Activated CD4-positive, alpha-beta T cell treated with anti-CD3 and anti-CD28 coated beads, Interleukin-2, amount 10 ng/mL, durations not matched to agents 24 days and 14 days (primary cell): ENCODE measurements at regions of chr12 and their contacts with region 1.

Region 1: DNA sequence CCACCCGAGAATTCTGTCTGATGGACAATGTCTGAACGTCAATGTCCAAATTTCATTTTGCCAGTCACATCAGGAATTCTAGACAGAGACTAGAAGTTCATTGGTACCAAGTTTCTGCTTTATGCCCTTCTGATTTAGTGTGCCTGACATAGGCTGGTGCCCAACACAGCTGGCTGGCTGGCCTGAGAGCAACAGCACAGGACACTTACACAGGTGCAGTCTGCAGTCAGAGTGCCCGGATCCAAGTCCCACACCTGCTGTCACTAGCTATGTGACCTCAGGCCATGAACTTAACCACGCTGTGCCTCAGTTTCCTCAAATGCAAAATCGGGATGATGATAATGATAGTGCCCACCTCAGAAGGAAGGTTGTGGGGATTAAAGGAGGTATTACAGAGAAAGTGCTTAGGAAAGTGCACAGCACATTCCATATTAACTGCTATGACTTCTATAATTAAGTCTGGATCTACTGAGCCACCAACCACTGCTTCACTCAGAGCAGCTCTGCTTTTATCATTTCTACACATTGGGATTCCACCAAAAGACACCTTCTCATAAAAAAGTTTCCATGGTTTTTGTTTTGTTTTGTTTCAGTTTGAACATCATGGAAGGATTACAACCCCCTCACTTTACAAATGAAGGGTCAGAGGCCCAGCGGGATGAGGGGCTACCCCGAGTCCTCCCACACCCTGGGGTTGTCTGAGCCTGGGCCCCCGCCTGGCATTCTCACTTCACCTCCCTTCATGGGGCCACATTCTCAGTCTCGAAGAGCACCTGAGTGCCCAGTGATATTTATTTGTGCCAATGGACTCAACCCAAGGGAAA is 168.8 kb upstream of the BCL2L14 start:
- DNase-seq: peak; percentile 72
- H3K4me3 Mint-ChIP-seq: peak overlapping the region; percentile 58
- H3K27ac Mint-ChIP-seq: peak overlapping the region; percentile 97
- H3K4me1 Mint-ChIP-seq: peaks cover 62% of the 10 kb centered on the region
- H3K27me3 Mint-ChIP-seq: no peaks in the 10 kb centered on the region

Region 2: GRCh38 chr12:11765817-11766794 is 135.8 kb before region 1 on chr12:
- intact Hi-C with region 1: loop called (anchors 1 kb)
- DNase-seq: peak; percentile 74
- H3K4me3 Mint-ChIP-seq: peak overlapping the region; percentile 69
- H3K27ac Mint-ChIP-seq: peak overlapping the region; percentile 95
- H3K4me1 Mint-ChIP-seq: peaks cover 90% of the 10 kb centered on the region
- H3K27me3 Mint-ChIP-seq: no peaks in the 10 kb centered on the region

Region 3: DNA sequence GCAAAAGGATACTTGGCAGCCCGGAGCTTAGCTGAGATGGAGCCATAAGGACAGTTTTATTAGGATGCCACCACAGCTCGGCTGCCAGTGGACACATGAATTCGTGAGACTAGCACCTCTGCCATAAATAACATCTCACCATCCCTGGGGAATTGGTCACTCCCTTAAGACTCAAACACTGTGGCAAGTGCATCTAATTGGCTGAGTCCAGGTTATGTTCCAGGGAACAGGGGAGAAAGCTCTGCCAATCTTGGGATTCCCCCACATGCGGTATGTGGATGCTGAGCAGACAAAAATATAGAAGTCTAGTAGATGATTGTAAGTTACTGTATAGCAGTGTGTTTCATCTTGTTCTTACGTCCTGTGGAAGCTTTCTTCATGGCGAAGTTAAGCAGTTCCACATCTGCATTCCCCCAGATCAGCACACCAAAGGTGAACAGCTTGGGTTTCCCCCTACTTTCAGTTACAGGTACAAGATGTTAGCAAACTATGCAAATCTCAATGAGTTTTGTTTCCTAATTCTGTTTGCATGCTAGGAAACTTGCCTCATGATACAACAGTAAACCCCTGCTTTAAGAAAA is 121.3 kb before region 1 on chr12:
- intact Hi-C with region 1: loop called (anchors 1 kb)
- DNase-seq: peak; percentile 54
- H3K4me3 Mint-ChIP-seq: peak overlapping the region; percentile 29
- H3K27ac Mint-ChIP-seq: peak overlapping the region; percentile 87
- H3K4me1 Mint-ChIP-seq: peaks cover 66% of the 10 kb centered on the region
- H3K27me3 Mint-ChIP-seq: no peaks in the 10 kb centered on the region

Region 4: GRCh38 chr12:11958221-11959091 is 56.5 kb after region 1 on chr12:
- intact Hi-C with region 1: loop called (anchors 1 kb)
- DNase-seq: peak; percentile 85
- H3K4me3 Mint-ChIP-seq: peak overlapping the region; percentile 27
- H3K27ac Mint-ChIP-seq: peak overlapping the region; percentile 91
- H3K4me1 Mint-ChIP-seq: peaks cover 57% of the 10 kb centered on the region
- H3K27me3 Mint-ChIP-seq: no peaks in the 10 kb centered on the region

Region 5: DNA sequence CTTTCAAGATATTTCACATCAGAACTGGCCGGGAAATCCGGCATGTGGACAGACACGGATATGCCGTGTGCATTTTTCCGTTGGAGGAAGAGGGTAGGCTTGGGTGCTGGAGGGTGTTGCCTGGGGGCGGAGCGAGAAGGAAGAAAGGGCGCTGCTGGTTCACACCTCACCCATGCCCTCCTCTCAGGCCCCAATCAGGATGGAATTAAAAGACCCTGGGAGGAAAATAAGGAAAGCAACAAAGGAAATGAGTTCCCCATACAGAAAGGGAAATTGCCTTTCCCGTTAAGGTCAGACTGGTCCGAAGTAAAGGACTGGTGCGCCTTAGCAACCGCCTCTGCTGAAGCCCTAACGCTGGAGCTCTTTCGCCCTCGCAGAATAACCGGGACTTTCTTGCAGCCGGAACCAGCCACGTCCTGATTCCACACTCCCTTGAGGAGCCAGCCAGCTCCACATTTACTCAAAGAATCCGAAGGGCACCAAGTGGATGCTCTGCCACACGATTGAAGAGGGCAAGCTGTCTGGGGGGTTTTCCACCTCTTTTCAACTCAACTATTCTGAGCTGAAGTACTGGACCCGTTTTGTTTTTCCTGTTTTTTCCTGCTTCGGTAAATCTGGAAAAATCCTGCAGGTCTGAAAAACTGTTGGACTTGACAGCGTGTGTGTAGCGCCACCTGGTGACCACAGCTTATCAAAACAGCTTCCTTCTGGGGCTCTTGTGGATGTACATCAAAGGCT is 131.1 kb after region 1 on chr12:
- intact Hi-C with region 1: loop called (anchors 1 kb)
- DNase-seq: peak; percentile 90
- H3K4me3 Mint-ChIP-seq: peak overlapping the region; percentile 81
- H3K27ac Mint-ChIP-seq: peak overlapping the region; percentile 93
- H3K4me1 Mint-ChIP-seq: peaks cover 59% of the 10 kb centered on the region
- H3K27me3 Mint-ChIP-seq: no peaks in the 10 kb centered on the region